ENCODE measurements at regions of chrX and their contacts with region 1.

Region 1: DNA sequence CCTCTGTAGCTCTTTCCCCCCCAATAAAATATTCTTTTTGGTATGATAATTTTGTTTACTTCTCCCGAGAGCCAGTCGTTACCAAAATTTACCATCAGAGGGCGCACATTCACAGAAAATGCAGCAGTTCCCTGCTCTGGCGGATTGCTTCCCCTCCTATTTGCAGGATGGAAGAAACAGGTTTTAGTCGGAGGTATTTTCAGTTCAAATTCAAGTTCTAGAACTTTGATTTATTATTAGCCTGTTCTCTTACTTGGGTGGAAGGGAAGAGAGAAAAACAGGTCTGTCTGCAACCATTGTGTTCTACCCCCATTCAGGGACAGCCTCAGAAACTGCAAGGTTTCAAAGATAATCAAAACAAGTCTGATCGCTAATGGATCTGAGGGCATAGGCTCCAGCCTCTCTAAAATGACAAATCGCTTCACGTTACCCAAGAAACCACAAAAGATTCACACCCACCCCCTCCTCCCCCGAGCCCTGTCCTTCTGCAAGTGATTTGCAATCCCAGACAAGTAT is 263.8 kb upstream of the RPS6KA3 start:
- DNase-seq: no peak
- ATAC-seq: no peak
- H3K4me3 ChIP-seq: no peak overlapping the region
- H3K27ac ChIP-seq: no peak overlapping the region
- H3K4me1 ChIP-seq: no peaks in the 10 kb centered on the region
- H3K27me3 ChIP-seq: no peaks in the 10 kb centered on the region
- CTCF ChIP-seq: peak; percentile 70

Region 2: GRCh38 chrX:20412871-20413486 is 117.5 kb before region 1 on chrX:
- CTCF ChIA-PET with region 1: no interaction called
- POLR2A ChIA-PET with region 1: no interaction called
- in situ Hi-C with region 1: no loop called
- intact Hi-C with region 1: no loop called
- DNase-seq: no peak
- ATAC-seq: no peak
- H3K4me3 ChIP-seq: no peak overlapping the region
- H3K27ac ChIP-seq: no peak overlapping the region
- H3K4me1 ChIP-seq: no peaks in the 10 kb centered on the region
- H3K27me3 ChIP-seq: no peaks in the 10 kb centered on the region
- CTCF ChIP-seq: no peak

Region 3: DNA sequence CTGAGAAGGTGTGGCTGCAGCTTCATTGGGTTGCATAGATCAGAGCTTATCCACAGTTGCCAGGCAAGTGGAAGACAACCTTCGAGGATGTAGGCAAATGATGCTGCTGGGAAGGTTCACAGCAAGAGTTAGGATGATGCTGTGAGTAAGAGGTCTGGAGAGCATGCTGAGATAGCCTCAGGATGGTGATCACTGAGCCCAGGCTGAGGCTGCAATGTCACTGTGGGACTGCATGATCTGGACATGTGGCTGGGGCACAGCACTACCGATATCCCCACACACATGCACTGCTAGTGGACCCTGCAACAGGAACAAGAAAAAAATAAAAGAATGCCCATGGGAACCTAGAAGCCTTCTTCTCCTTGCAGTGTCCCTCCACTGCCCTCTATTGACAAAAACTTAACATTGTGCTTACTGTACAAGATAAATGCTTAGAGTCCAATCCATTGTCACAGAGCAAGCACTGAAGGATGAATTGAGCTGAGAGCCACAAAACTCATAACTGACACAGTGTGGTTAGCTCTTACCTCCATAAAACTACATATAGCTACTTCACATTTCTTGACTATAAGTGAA is 949.3 kb after region 1 on chrX:
- CTCF ChIA-PET with region 1: interaction called, 4 read pairs
- POLR2A ChIA-PET with region 1: no interaction called
- in situ Hi-C with region 1: no loop called
- intact Hi-C with region 1: loop called (anchors 10 kb)
- DNase-seq: peak; percentile 12
- ATAC-seq: 0 out of 2 replicates have a peak, but pooled peaks have one; percentile 60
- H3K4me3 ChIP-seq: no peak overlapping the region
- H3K27ac ChIP-seq: no peak overlapping the region
- H3K4me1 ChIP-seq: no peaks in the 10 kb centered on the region
- H3K27me3 ChIP-seq: no peaks in the 10 kb centered on the region
- CTCF ChIP-seq: peak; percentile 75

Region 4: GRCh38 chrX:21725496-21725895 is 1195.0 kb after region 1 on chrX:
- CTCF ChIA-PET with region 1: no interaction called
- POLR2A ChIA-PET with region 1: no interaction called
- in situ Hi-C with region 1: no loop called
- intact Hi-C with region 1: loop called (anchors 10 kb)
- DNase-seq: no peak
- ATAC-seq: no peak
- H3K4me3 ChIP-seq: no peak overlapping the region
- H3K27ac ChIP-seq: no peak overlapping the region
- H3K4me1 ChIP-seq: no peaks in the 10 kb centered on the region
- H3K27me3 ChIP-seq: no peaks in the 10 kb centered on the region
- CTCF ChIP-seq: peak; percentile 62